Panc1 (cell line): ENCODE measurements at regions of chr20 and their contacts with region 1.

Region 1: GRCh38 chr20:35207950-35208611 is 18.4 kb upstream of the MMP24 start:
- DNase-seq: peak; percentile 74
- ATAC-seq: peak; percentile 98
- H3K4me3 ChIP-seq: peak overlapping the region in 1 of 2 experiments; percentile 29; a peak in 2 of 4 replicates
- H3K27ac ChIP-seq: no peak overlapping the region
- H3K4me1 ChIP-seq: no peaks in the 10 kb centered on the region
- H3K27me3 ChIP-seq: no peaks in the 10 kb centered on the region
- CTCF ChIP-seq: peak; percentile 82

Region 2: GRCh38 chr20:34824452-34824805 is 383.7 kb before region 1 on chr20:
- CTCF ChIA-PET with region 1: no interaction called
- POLR2A ChIA-PET with region 1: no interaction called
- in situ Hi-C with region 1: no loop called
- intact Hi-C with region 1: no loop called
- DNase-seq: peak; percentile 46
- ATAC-seq: peak; percentile 71
- H3K4me3 ChIP-seq: peak overlapping the region; percentile 86 to 96
- H3K27ac ChIP-seq: peak overlapping the region; percentile 92
- H3K4me1 ChIP-seq: peaks cover 4% of the 10 kb centered on the region; the same call in 1 of the 2 replicates
- H3K27me3 ChIP-seq: no peaks in the 10 kb centered on the region
- CTCF ChIP-seq: no peak

Region 3: GRCh38 chr20:34834459-34834893 is 373.6 kb before region 1 on chr20:
- CTCF ChIA-PET with region 1: no interaction called
- POLR2A ChIA-PET with region 1: no interaction called
- in situ Hi-C with region 1: no loop called
- intact Hi-C with region 1: loop called (anchors 10 kb)
- DNase-seq: peak; percentile 22
- ATAC-seq: peak; percentile 79
- H3K4me3 ChIP-seq: no peak overlapping the region; a peak in 1 of 4 replicates
- H3K27ac ChIP-seq: no peak overlapping the region
- H3K4me1 ChIP-seq: no peaks in the 10 kb centered on the region
- H3K27me3 ChIP-seq: no peaks in the 10 kb centered on the region
- CTCF ChIP-seq: peak; percentile 63

Region 4: GRCh38 chr20:35085477-35086225 is 122.4 kb before region 1 on chr20:
- CTCF ChIA-PET with region 1: no interaction called
- POLR2A ChIA-PET with region 1: no interaction called
- in situ Hi-C with region 1: no loop called
- intact Hi-C with region 1: no loop called
- DNase-seq: no peak
- ATAC-seq: no peak
- H3K4me3 ChIP-seq: no peak overlapping the region
- H3K27ac ChIP-seq: no peak overlapping the region
- H3K4me1 ChIP-seq: peaks cover 10% of the 10 kb centered on the region; the same call in 1 of the 2 replicates
- H3K27me3 ChIP-seq: no peaks in the 10 kb centered on the region
- CTCF ChIP-seq: no peak

Region 5: GRCh38 chr20:35146920-35147574 is 61.0 kb before region 1 on chr20 and contains the start of gene EDEM2:
- CTCF ChIA-PET with region 1: interaction called, 20 read pairs
- POLR2A ChIA-PET with region 1: no interaction called
- in situ Hi-C with region 1: no loop called
- intact Hi-C with region 1: loop called (anchors 1 kb)
- DNase-seq: peak; percentile 82
- ATAC-seq: peak; percentile 96
- H3K4me3 ChIP-seq: peak within 1 kb of the TSS; percentile 92 to 96
- H3K27ac ChIP-seq: peak within 1 kb of the TSS; percentile 90
- H3K4me1 ChIP-seq: peaks cover 2% of the 10 kb centered on the region; the same call in 1 of the 2 replicates
- H3K27me3 ChIP-seq: no peaks in the 10 kb centered on the region
- CTCF ChIP-seq: no peak
- total RNA-seq, gene EDEM2: 34.7 TPM